ENCODE measurements at regions of chr6 and their contacts with region 1.

Region 1: DNA sequence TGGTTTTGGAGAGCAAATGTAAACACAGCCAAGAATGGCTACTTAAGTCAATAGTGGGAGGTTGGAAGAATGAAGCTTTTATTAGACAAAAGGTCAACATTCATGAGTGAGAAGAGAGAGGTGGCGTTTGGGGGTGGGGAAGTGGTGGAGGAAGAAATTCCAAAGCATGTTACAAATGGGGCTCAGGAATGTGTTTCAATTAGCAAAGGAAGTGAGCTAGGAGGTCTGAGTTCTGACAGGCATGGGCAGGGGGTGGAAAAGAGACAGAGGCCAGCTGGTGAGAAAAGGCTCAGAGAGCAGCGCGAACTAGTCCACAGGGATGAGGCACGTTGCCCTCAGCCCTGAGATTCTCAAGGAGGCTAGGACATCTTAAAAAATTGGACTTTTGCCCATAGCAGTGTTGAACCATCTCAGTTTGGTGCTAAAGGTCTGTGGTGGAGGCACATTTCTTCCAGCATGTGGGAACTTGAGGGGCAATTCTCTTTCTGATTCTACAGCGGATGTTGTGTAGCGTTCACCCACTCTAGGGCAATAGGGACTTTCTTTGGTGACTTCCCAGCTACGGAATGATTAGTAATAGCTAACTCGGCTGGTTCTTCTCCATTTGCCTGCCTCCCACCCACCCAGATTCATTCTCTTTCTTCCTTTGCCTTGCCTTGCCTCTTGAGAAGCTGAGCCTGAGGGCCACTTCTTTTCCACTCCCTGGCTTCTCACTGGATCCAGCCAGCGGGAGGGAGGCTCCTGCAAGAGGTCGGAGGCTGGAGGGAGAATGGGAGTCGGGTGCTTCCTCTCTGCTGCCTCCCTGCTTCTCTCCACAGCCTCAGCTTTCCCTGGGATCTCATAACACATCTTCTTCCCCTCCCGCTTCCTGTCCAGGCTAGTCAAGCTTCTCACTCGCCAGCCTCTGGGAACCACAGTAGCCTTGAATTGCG is 45.1 kb upstream of the NEDD9 start:
- DNase-seq: peak; percentile 94
- ATAC-seq: peak; percentile 78
- H3K4me3 ChIP-seq: peak overlapping the region; percentile 23; the same call in 1 of the 2 replicates
- H3K27ac ChIP-seq: peak overlapping the region; percentile 95
- H3K4me1 ChIP-seq: peaks cover 46% of the 10 kb centered on the region
- H3K27me3 ChIP-seq: no peaks in the 10 kb centered on the region
- CTCF ChIP-seq: no peak
- EP300 ChIP-seq: peak; percentile 65 to 83; a peak in 2 of 4 replicates
- POLR2A ChIP-seq: peak; percentile 55
- RAD21 ChIP-seq: peak; percentile 12; the same call in 1 of the 2 replicates

Region 2: DNA sequence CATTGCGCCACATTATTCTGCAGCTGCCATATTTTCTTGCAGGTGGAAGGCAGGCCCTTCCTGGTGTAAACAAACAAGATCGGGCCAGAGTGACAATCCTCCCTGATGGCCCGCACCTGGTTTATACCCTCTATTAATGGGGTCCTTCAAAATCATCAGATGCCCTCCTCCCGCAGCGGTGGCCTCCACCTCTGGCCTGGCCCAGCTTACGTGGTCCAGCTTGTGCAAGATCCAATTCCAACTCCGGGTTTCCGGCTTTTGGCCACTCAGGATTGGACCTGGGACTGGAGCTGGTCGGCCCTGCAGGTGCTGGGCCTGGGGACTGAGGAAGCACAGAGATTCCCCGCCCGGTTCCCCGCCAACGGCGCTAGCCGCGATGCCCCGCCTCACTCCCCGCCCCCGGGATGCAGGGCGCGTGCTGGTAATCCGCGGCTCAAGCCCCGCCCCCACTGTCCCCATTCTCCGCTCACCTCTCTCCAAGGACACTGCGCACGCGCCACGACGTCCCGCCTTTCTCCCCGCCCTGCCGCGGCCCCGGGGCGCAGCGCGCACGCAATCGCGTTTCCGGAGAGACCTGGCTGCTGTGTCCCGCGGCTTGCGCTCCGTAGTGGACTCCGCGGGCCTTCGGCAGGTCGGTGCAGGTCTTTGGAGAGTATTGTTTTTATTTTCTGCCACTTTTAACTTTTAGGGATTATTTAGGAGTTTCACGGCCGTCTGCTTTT is 530.1 kb before region 1 on chr6 and contains the start of gene TMEM14B:
- CTCF ChIA-PET with region 1: no interaction called
- POLR2A ChIA-PET with region 1: no interaction called
- RAD21 ChIA-PET with region 1: no interaction called
- SMC1A ChIA-PET with region 1: no interaction called
- in situ Hi-C with region 1: no loop called
- intact Hi-C with region 1: no loop called
- DNase-seq: peak; percentile 90
- ATAC-seq: peak; percentile 98
- H3K4me3 ChIP-seq: peak within 1 kb of the TSS; percentile 87
- H3K27ac ChIP-seq: peak within 1 kb of the TSS; percentile 69
- H3K4me1 ChIP-seq: peaks cover 5% of the 10 kb centered on the region; the same call in 1 of the 2 replicates
- H3K27me3 ChIP-seq: no peaks in the 10 kb centered on the region
- CTCF ChIP-seq: no peak
- EP300 ChIP-seq: no peak
- POLR2A ChIP-seq: peak; percentile 94
- RAD21 ChIP-seq: no peak
- polyA plus RNA-seq, gene TMEM14B: 366 to 399 TPM

Region 3: GRCh38 chr6:11224252-11224965 is 53.1 kb before region 1 on chr6:
- CTCF ChIA-PET with region 1: interaction called, 10 read pairs
- POLR2A ChIA-PET with region 1: interaction called, 67 read pairs
- RAD21 ChIA-PET with region 1: interaction called, 11 read pairs
- SMC1A ChIA-PET with region 1: interaction called, 99 read pairs
- in situ Hi-C with region 1: no loop called
- intact Hi-C with region 1: no loop called
- DNase-seq: peak; percentile 43
- ATAC-seq: peak; percentile 82
- H3K4me3 ChIP-seq: no peak overlapping the region
- H3K27ac ChIP-seq: 0 out of 2 replicates have a peak overlapping the region, but pooled peaks have one; percentile 25
- H3K4me1 ChIP-seq: peaks cover 21% of the 10 kb centered on the region
- H3K27me3 ChIP-seq: no peaks in the 10 kb centered on the region
- CTCF ChIP-seq: no peak
- EP300 ChIP-seq: no peak
- POLR2A ChIP-seq: no peak
- RAD21 ChIP-seq: 0 out of 2 replicates have a peak, but pooled peaks have one; percentile 6

Region 4: DNA sequence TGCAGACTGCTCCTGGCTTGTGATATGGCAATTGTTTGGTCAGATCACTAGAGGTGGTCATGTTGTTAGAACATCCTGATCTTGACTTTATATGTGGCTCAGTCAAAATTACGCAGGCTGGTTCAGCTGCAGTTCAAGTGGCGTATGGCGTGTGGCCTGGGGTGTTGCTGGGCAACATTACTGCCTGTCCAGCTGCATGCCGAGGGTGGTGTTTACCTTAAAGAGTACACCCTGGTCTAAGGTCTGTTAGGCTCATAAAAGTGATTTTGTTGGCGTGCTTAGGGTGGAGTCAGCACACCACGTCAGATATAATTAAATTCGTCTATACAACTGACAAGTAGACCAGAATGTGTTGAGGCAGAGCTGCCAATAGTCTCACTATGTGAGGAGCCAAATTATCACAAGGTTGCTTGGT is 10.5 kb after region 1 on chr6:
- CTCF ChIA-PET with region 1: interaction called, 12 read pairs
- POLR2A ChIA-PET with region 1: interaction called, 15 read pairs
- RAD21 ChIA-PET with region 1: interaction called, 57 read pairs
- SMC1A ChIA-PET with region 1: interaction called, 86 read pairs
- in situ Hi-C with region 1: no loop called
- intact Hi-C with region 1: loop called (anchors 1 kb)
- DNase-seq: no peak
- ATAC-seq: no peak
- H3K4me3 ChIP-seq: no peak overlapping the region
- H3K27ac ChIP-seq: no peak overlapping the region
- H3K4me1 ChIP-seq: no peaks in the 10 kb centered on the region; the same call in 1 of the 2 replicates
- H3K27me3 ChIP-seq: no peaks in the 10 kb centered on the region
- CTCF ChIP-seq: no peak
- EP300 ChIP-seq: no peak
- POLR2A ChIP-seq: no peak
- RAD21 ChIP-seq: no peak

Region 5: GRCh38 chr6:11330413-11330760 is 52.8 kb after region 1 on chr6:
- CTCF ChIA-PET with region 1: interaction called, 7 read pairs
- POLR2A ChIA-PET with region 1: interaction called, 3 read pairs
- RAD21 ChIA-PET with region 1: interaction called, 66 read pairs
- SMC1A ChIA-PET with region 1: interaction called, 59 read pairs
- in situ Hi-C with region 1: no loop called
- intact Hi-C with region 1: no loop called
- DNase-seq: no peak
- ATAC-seq: peak; percentile 35; the same call in 2 of the 3 replicates
- H3K4me3 ChIP-seq: no peak overlapping the region
- H3K27ac ChIP-seq: peak overlapping the region; percentile 58
- H3K4me1 ChIP-seq: peaks cover 35% of the 10 kb centered on the region
- H3K27me3 ChIP-seq: no peaks in the 10 kb centered on the region
- CTCF ChIP-seq: no peak
- EP300 ChIP-seq: no peak
- POLR2A ChIP-seq: no peak
- RAD21 ChIP-seq: no peak

Region 6: GRCh38 chr6:11414176-11414963 is 136.8 kb after region 1 on chr6:
- CTCF ChIA-PET with region 1: no interaction called
- POLR2A ChIA-PET with region 1: interaction called, 3 read pairs
- RAD21 ChIA-PET with region 1: no interaction called
- SMC1A ChIA-PET with region 1: interaction called, 30 read pairs
- in situ Hi-C with region 1: no loop called
- intact Hi-C with region 1: no loop called
- DNase-seq: peak; percentile 72
- ATAC-seq: peak; percentile 79
- H3K4me3 ChIP-seq: no peak overlapping the region
- H3K27ac ChIP-seq: 0 out of 2 replicates have a peak overlapping the region, but pooled peaks have one; percentile 4
- H3K4me1 ChIP-seq: peaks cover 30% of the 10 kb centered on the region
- H3K27me3 ChIP-seq: no peaks in the 10 kb centered on the region
- CTCF ChIP-seq: no peak
- EP300 ChIP-seq: no peak
- POLR2A ChIP-seq: no peak
- RAD21 ChIP-seq: no peak

Region 7: DNA sequence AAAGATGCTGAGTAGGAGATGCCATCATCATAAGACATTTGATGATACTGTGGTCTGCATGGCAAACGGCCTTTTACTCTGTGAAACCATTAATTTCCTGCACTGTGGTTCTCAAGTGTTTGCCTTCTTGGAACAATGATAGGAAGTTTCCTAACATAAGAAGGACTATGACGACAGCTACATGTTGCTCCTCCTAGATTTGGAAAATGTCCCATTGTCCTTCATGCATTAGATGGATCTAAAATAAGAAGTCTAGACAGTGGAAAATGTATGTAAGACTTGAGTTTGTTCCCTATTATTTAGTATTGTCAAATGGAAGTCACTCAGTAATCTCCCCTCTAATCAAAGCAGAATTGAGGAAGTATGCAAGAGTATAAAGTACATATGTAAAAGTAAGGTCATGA is 161.5 kb after region 1 on chr6:
- CTCF ChIA-PET with region 1: no interaction called
- POLR2A ChIA-PET with region 1: no interaction called
- RAD21 ChIA-PET with region 1: no interaction called
- SMC1A ChIA-PET with region 1: no interaction called
- in situ Hi-C with region 1: no loop called
- intact Hi-C with region 1: no loop called
- DNase-seq: no peak
- ATAC-seq: no peak
- H3K4me3 ChIP-seq: no peak overlapping the region
- H3K27ac ChIP-seq: no peak overlapping the region
- H3K4me1 ChIP-seq: no peaks in the 10 kb centered on the region
- H3K27me3 ChIP-seq: no peaks in the 10 kb centered on the region
- CTCF ChIP-seq: no peak
- EP300 ChIP-seq: no peak
- POLR2A ChIP-seq: no peak
- RAD21 ChIP-seq: no peak

Region 8: GRCh38 chr6:11514672-11515071 is 237.1 kb after region 1 on chr6:
- CTCF ChIA-PET with region 1: no interaction called
- POLR2A ChIA-PET with region 1: no interaction called
- RAD21 ChIA-PET with region 1: interaction called, 3 read pairs
- SMC1A ChIA-PET with region 1: interaction called, 10 read pairs
- in situ Hi-C with region 1: no loop called
- intact Hi-C with region 1: no loop called
- DNase-seq: peak; percentile 87
- ATAC-seq: peak; percentile 87
- H3K4me3 ChIP-seq: no peak overlapping the region
- H3K27ac ChIP-seq: peak overlapping the region; percentile 97
- H3K4me1 ChIP-seq: peaks cover 40% of the 10 kb centered on the region
- H3K27me3 ChIP-seq: no peaks in the 10 kb centered on the region
- CTCF ChIP-seq: no peak
- EP300 ChIP-seq: peak in 1 of 2 experiments; percentile 89; a peak in 1 of 4 replicates
- POLR2A ChIP-seq: no peak
- RAD21 ChIP-seq: no peak

Measured in GM12878 (cell line).